Activated CD4-positive, alpha-beta T cell treated with anti-CD3 and anti-CD28 coated beads, Interleukin-2, amount 10 ng/mL, durations not matched to agents 7 days and 5 days (primary cell): ENCODE measurements at regions of chr13 and their contacts with region 1.

Region 1: GRCh38 chr13:40149611-40150274 is 494.3 kb downstream of the COG6 start:
- DNase-seq: no peak
- H3K4me3 Mint-ChIP-seq: no peak overlapping the region
- H3K27ac Mint-ChIP-seq: peak overlapping the region; percentile 20
- H3K4me1 Mint-ChIP-seq: peaks cover 49% of the 10 kb centered on the region
- H3K27me3 Mint-ChIP-seq: no peaks in the 10 kb centered on the region

Region 2: GRCh38 chr13:39740783-39741182 is 409.0 kb before region 1 on chr13:
- CTCF ChIA-PET with region 1: no interaction called
- POLR2A ChIA-PET with region 1: no interaction called
- DNase-seq: no peak
- H3K4me3 Mint-ChIP-seq: no peak overlapping the region
- H3K27ac Mint-ChIP-seq: no peak overlapping the region
- H3K4me1 Mint-ChIP-seq: no peaks in the 10 kb centered on the region
- H3K27me3 Mint-ChIP-seq: no peaks in the 10 kb centered on the region

Region 3: GRCh38 chr13:40137400-40137799 is 12.3 kb before region 1 on chr13:
- CTCF ChIA-PET with region 1: interaction called, 13 read pairs
- POLR2A ChIA-PET with region 1: no interaction called
- DNase-seq: no peak
- H3K4me3 Mint-ChIP-seq: no peak overlapping the region
- H3K27ac Mint-ChIP-seq: no peak overlapping the region
- H3K4me1 Mint-ChIP-seq: peaks cover 5% of the 10 kb centered on the region
- H3K27me3 Mint-ChIP-seq: no peaks in the 10 kb centered on the region

Region 4: GRCh38 chr13:40168425-40169166 is 18.9 kb after region 1 on chr13:
- CTCF ChIA-PET with region 1: interaction called, 15 read pairs
- POLR2A ChIA-PET with region 1: no interaction called
- DNase-seq: no peak
- H3K4me3 Mint-ChIP-seq: no peak overlapping the region
- H3K27ac Mint-ChIP-seq: no peak overlapping the region
- H3K4me1 Mint-ChIP-seq: peaks cover 39% of the 10 kb centered on the region
- H3K27me3 Mint-ChIP-seq: no peaks in the 10 kb centered on the region